ENCODE measurements at regions of chr7 and their contacts with region 1.

Region 1: DNA sequence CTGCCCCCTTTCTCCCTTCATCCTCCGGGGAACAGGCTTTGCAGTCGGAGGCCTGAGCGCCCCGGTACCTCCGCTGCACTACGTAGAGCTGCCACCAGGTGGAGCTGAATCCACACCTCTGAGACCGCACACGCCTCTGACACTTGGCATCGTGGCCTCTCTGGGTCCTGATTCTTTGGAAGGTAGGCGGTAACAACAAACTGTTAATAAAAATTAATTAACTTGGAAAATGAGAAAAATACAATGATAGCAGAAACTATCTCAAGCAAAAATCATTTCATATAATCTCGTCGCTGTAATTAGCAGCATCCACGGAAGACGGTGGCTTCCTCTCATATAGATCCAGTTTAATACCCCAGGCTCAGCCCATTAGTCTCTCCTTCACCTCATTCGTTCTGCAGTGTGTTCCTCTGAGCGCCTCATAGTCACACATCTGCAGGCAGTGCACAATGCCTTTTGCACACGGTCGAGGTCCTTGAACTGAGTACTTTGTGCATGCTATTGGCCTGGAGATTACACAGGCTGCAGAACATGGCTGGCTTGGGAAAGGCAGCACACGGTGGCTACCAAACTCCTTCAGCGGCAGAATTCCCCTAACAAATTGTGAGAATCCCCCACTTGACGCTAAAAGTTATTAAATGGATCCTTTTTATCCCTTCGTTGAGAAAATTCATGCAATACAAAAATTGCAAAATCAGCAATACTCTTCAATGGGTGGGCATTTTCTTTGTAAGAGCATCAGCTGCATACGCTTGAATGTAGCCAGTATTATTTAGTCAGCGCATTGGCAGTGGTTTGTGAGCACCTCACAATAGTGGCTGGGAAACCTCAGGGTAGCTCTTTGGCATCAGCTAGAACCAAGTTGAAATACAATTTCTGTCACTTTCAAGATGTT is 18.7 kb downstream of the OR9A2 start:
- DNase-seq: peak; percentile 55 to 80
- H3K4me3 ChIP-seq: no peak overlapping the region
- H3K27ac ChIP-seq: no peak overlapping the region
- H3K4me1 ChIP-seq: peaks cover 1% of the 10 kb centered on the region; the same call in 1 of the 2 replicates
- H3K27me3 ChIP-seq: no peaks in the 10 kb centered on the region
- CTCF ChIP-seq: peak; percentile 99

Region 2: DNA sequence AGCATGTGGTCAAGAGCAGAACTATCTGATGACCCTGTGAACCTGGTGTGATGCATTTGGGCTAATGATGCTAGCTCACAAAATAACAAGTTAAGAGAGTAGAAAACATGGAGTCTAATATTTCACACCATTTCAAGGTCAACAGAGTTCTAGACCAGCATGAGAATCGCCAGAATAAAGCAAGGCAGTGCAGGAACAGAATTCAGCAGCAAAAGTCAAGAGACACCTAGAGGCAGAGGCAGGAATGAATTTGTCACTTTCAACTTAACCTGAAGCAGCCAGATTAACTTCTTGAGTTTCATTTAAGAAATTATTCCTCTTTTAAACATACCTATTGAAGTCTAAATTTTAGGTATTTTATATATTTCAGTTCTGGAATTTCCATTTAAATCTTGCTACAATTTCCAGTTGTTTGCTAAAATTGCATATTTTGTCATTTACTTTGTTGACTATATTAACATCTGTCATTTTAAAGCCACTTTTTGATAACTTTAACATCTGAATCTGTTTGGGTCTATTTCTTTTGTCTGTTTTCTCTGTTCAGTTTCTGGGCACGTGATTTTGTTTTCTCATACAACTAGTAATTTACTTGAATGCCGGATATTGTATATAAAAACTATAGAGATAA is 706.2 kb before region 1 on chr7:
- CTCF ChIA-PET with region 1: no interaction called
- POLR2A ChIA-PET with region 1: no interaction called
- intact Hi-C with region 1: loop called (anchors 5 kb)
- DNase-seq: no peak
- H3K4me3 ChIP-seq: no peak overlapping the region
- H3K27ac ChIP-seq: no peak overlapping the region
- H3K4me1 ChIP-seq: no peaks in the 10 kb centered on the region
- H3K27me3 ChIP-seq: no peaks in the 10 kb centered on the region
- CTCF ChIP-seq: 0 out of 2 replicates have a peak, but pooled peaks have one; percentile 35

Region 3: GRCh38 chr7:142420559-142421362 is 587.5 kb before region 1 on chr7:
- CTCF ChIA-PET with region 1: no interaction called
- POLR2A ChIA-PET with region 1: no interaction called
- intact Hi-C with region 1: loop called (anchors 5 kb)
- DNase-seq: peak; percentile 74 to 79
- H3K4me3 ChIP-seq: no peak overlapping the region
- H3K27ac ChIP-seq: 0 out of 2 replicates have a peak overlapping the region, but pooled peaks have one; percentile 22
- H3K4me1 ChIP-seq: peaks cover 9% of the 10 kb centered on the region
- H3K27me3 ChIP-seq: no peaks in the 10 kb centered on the region
- CTCF ChIP-seq: peak; percentile 59; the same call in 1 of the 2 replicates

Region 4: GRCh38 chr7:142632291-142633134 is 375.7 kb before region 1 on chr7:
- CTCF ChIA-PET with region 1: interaction called, 4 read pairs
- POLR2A ChIA-PET with region 1: no interaction called
- intact Hi-C with region 1: loop called (anchors 10 kb)
- DNase-seq: peak; percentile 70 to 72
- H3K4me3 ChIP-seq: no peak overlapping the region
- H3K27ac ChIP-seq: no peak overlapping the region
- H3K4me1 ChIP-seq: no peaks in the 10 kb centered on the region
- H3K27me3 ChIP-seq: no peaks in the 10 kb centered on the region
- CTCF ChIP-seq: peak; percentile 93

Region 5: GRCh38 chr7:142811154-142811737 is 197.0 kb before region 1 on chr7:
- CTCF ChIA-PET with region 1: interaction called, 6 read pairs
- POLR2A ChIA-PET with region 1: no interaction called
- intact Hi-C with region 1: loop called (anchors 10 kb)
- DNase-seq: peak; percentile 22 to 78
- H3K4me3 ChIP-seq: no peak overlapping the region
- H3K27ac ChIP-seq: peak overlapping the region; percentile 96
- H3K4me1 ChIP-seq: peaks cover 84% of the 10 kb centered on the region
- H3K27me3 ChIP-seq: no peaks in the 10 kb centered on the region
- CTCF ChIP-seq: peak; percentile 95

Region 6: DNA sequence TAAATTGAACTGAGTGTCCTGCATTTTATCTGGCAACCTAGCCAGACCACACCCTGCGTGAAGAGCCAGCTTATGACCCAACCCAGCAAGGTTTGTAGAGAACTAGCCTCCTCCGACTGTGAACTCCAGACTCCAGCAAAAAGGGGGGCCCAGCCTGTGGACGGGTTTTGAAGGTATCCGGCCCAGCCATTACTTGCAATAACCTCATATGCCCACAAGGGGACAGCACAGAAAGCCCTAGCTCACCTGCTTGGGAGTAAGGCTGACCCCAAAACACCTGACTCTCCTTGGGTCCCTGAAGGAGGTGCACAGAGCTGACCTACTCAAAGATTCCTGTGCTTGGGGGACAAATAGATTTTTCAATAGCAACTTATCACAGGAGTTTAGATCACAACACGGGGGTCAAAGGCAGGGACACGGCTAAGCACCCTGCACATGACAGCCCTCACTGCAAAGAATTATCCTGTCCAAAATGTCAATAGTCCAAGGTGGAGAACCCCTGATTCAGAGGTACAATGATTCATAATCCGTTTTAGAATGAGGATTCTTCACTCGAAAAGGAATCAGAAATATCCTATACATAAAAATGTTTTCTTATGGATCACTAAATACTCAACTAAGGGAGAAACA is 127.3 kb before region 1 on chr7:
- CTCF ChIA-PET with region 1: interaction called, 12 read pairs
- POLR2A ChIA-PET with region 1: no interaction called
- intact Hi-C with region 1: no loop called
- DNase-seq: peak in 1 of 2 experiments; percentile 46
- H3K4me3 ChIP-seq: no peak overlapping the region
- H3K27ac ChIP-seq: no peak overlapping the region
- H3K4me1 ChIP-seq: peaks cover 33% of the 10 kb centered on the region
- H3K27me3 ChIP-seq: no peaks in the 10 kb centered on the region
- CTCF ChIP-seq: peak; percentile 91

Region 7: DNA sequence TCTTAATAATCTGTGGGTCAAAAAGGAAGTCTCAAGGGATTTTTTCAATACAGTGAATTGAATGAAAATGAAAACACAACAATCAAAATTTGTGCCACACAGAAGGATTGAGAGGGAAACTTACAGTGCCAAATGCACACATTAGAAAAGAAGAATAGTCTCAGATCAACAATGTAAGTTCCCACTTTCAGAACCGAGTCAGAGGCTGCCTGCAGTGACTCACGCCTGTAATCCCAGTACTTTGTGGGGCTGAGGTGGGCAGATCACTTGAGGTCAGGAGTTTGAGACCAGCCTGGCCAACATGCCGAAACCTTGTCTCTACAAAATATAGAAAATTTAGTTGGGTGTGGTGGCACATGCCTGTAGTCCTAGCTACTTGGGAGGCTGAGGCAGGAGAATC is 33.6 kb before region 1 on chr7:
- CTCF ChIA-PET with region 1: no interaction called
- POLR2A ChIA-PET with region 1: no interaction called
- intact Hi-C with region 1: no loop called
- DNase-seq: no peak
- H3K4me3 ChIP-seq: no peak overlapping the region
- H3K27ac ChIP-seq: no peak overlapping the region
- H3K4me1 ChIP-seq: no peaks in the 10 kb centered on the region
- H3K27me3 ChIP-seq: no peaks in the 10 kb centered on the region
- CTCF ChIP-seq: no peak

Region 8: GRCh38 chr7:143299346-143299745 is 291.1 kb after region 1 on chr7:
- CTCF ChIA-PET with region 1: no interaction called
- POLR2A ChIA-PET with region 1: no interaction called
- intact Hi-C with region 1: no loop called
- DNase-seq: no peak
- H3K4me3 ChIP-seq: no peak overlapping the region
- H3K27ac ChIP-seq: no peak overlapping the region
- H3K4me1 ChIP-seq: no peaks in the 10 kb centered on the region
- H3K27me3 ChIP-seq: no peaks in the 10 kb centered on the region
- CTCF ChIP-seq: no peak

Measured in PC-9 (cell line).